A549 (cell line): ENCODE measurements at regions of chr3 and their contacts with region 1.

Region 1: DNA sequence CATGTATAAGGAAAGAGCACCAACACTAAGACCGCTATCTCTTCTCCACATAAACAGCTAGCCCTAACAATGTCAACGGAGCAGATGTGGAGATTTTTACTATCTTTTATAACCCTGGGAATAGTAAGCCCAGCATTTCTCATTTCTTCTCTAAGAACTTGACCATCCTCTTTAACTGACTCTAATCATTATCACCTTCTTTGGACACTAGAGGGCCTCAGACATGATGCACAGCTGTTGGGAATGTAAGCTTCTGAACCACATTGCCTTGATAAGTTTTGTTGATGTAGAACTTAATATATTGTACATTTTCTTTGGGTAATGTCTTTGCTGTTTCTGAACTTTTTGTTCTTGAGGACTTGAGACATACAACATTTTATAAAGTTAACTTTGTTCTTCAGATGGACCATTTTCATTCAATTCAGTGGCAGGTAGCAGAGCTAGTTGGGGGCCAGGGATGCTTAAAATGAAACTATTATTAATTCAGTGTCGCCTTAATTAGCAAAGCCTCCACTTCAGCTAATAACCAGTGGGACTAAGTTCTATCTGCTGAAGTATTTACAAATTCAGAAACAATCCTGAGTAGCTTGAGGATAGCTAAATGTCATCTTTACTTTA is 9.6 kb upstream of the TAGLN3 start:
- DNase-seq: peak; percentile 49 to 71
- ATAC-seq: peak; percentile 94 to 97
- H3K4me3 ChIP-seq: no peak overlapping the region
- H3K27ac ChIP-seq: no peak overlapping the region
- H3K4me1 ChIP-seq: peaks cover 2% of the 10 kb centered on the region; the same call in 1 of the 3 replicates
- CTCF ChIP-seq: peak; percentile 81
- EP300 ChIP-seq: no peak
- POLR2A ChIP-seq: no peak
- RAD21 ChIP-seq: peak; percentile 57 to 59

Region 2: DNA sequence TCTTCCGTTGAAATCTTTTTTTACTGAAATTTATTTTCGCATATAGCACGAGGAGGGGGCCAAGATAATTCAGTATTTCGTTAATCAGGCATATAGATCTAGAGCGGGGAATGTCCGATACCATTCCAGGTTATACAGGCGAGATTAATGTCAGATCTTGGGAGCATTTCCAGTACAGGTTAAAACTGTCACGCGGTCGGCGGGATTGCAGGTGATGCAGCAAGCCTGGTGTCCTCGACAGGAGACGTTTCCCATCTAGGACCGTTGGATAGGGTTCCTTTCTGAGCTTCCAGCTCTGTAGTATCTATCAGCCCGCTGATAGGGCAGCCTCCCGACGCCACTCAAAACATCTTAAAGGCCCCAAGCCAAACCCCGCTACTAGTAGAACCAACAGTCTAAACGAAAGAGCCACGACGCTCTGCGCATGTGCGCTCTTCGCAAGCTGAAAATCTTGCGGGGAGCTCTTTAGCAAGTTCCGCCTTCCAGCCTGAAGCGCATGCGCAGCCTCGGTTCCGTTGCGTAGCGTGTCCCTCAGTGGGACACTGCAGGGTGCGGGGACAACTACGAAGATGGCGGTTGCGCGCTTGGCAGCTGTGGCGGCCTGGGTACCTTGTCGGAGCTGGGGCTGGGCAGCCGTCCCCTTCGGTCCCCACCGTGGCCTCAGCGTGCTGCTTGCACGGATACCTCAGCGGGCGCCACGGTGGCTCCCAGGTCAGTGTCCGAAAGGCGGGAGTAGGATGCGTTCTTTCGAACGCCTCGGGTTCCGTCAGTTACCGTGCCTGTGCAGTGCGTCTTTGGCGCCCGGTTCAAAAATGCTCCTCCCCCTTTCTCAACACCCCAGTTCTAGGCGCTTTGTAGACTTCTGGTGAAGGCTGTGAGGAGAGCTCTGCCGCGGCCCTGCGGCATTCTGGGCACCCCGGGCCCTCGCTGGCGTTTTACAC is 10.4 kb before region 1 on chr3 and contains the start of gene ABHD10:
- CTCF ChIA-PET with region 1: interaction called, 13 read pairs
- POLR2A ChIA-PET with region 1: interaction called, 18 read pairs
- DNase-seq: peak; percentile 87 to 99
- ATAC-seq: peak; percentile 96 to 98
- H3K4me3 ChIP-seq: peak within 1 kb of the TSS; percentile 62
- H3K27ac ChIP-seq: peak within 1 kb of the TSS; percentile 84 to 94
- H3K4me1 ChIP-seq: peaks cover 32% of the 10 kb centered on the region
- CTCF ChIP-seq: no peak
- EP300 ChIP-seq: no peak
- POLR2A ChIP-seq: peak; percentile 97
- RAD21 ChIP-seq: no peak
- polyA plus RNA-seq, gene ABHD10: 39.7 and 42.1 TPM in 2 replicates

Region 3: GRCh38 chr3:112007633-112008032 is 18.5 kb after region 1 on chr3:
- CTCF ChIA-PET with region 1: interaction called, 189 read pairs
- POLR2A ChIA-PET with region 1: interaction called, 3 read pairs
- DNase-seq: no peak
- ATAC-seq: no peak
- H3K4me3 ChIP-seq: no peak overlapping the region
- H3K27ac ChIP-seq: no peak overlapping the region
- H3K4me1 ChIP-seq: 0 out of 3 replicates have a peak, but pooled peaks cover 5% of the 10 kb centered on the region
- CTCF ChIP-seq: no peak
- EP300 ChIP-seq: no peak
- POLR2A ChIP-seq: no peak
- RAD21 ChIP-seq: no peak

Region 4: GRCh38 chr3:112043603-112044201 is 54.5 kb after region 1 on chr3:
- CTCF ChIA-PET with region 1: interaction called, 24 read pairs
- POLR2A ChIA-PET with region 1: no interaction called
- DNase-seq: peak; percentile 73 to 82
- ATAC-seq: peak; percentile 96 to 99
- H3K4me3 ChIP-seq: no peak overlapping the region
- H3K27ac ChIP-seq: no peak overlapping the region
- H3K4me1 ChIP-seq: peaks cover 11% of the 10 kb centered on the region; the same call in 1 of the 3 replicates
- CTCF ChIP-seq: peak; percentile 92
- EP300 ChIP-seq: no peak
- POLR2A ChIP-seq: no peak
- RAD21 ChIP-seq: peak; percentile 80 to 81